ENCODE measurements at regions of chr17 and their contacts with region 1.

Region 1: DNA sequence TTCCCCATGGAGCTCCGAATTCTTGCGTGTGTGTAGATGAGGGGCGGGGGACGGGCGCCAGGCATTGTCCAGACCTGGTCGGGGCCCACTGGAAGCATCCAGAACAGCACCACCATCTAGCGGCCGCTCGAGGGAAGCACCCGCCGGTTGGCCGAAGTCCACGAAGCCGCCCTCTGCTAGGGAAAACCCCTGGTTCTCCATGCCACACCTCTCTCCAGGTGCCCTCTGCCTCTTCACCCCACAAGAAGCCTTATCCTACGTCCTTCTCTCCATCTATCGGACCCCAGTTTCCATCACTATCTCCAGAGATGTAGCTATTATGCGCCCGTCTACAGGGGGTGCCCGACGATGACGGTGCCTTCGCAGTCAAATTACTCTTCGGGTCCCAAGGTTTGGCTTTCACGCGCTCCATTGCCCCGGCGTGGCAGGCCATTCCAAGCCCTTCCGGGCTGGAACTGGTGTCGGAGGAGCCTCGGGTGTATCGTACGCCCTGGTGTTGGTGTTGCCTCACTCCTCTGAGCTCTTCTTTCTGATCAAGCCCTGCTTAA is 617 bp upstream of the SENP3 start:
- DNase-seq: peak; percentile 23
- H3K4me3 ChIP-seq: peak overlapping the region; percentile 84
- CTCF ChIP-seq: peak; percentile 92

Region 2: DNA sequence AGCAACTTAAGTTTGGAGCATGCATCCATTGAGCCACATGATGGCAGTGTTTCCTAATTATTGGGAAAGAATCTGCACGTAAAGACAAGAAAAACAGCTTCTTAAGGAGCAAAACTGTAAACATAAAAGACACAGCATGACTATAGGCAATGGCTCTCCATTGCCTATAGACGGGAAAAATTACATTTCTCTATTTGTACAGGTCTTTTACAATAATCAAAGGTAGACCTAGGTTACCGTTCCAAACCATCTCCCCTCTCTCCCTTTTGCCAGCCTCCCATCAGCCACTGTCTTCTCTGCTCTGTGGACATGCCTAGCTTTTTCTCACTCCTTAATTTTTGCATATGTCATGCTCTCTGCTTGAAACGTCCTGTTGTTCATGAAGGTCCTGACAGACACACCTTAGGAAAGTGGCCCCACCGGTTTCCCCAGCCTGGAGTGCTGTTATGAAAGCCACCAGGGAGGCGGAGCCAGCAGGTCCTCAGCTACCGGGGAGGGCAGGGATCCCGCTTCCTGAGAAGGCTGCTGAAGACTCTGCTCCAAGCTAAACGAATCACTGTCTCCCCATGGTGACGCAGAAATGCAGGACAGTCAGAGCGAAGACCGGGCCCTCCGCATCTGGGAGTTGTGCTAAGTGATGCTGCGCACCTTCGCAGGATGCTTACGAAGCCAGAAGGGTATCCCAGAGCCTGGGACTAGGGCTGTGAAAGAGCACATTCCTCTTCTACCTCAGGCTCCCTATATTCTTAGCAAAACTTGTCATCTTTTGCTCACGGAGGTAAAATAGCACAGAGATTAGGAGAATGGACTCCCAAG is 515.0 kb before region 1 on chr17:
- CTCF ChIA-PET with region 1: interaction called, 15 read pairs
- POLR2A ChIA-PET with region 1: no interaction called
- DNase-seq: peak; percentile 44
- H3K4me3 ChIP-seq: no peak overlapping the region
- CTCF ChIP-seq: peak; percentile 51

Region 3: GRCh38 chr17:7147772-7148171 is 413.3 kb before region 1 on chr17:
- CTCF ChIA-PET with region 1: no interaction called
- POLR2A ChIA-PET with region 1: no interaction called
- DNase-seq: no peak
- H3K4me3 ChIP-seq: no peak overlapping the region
- CTCF ChIP-seq: no peak

Region 4: DNA sequence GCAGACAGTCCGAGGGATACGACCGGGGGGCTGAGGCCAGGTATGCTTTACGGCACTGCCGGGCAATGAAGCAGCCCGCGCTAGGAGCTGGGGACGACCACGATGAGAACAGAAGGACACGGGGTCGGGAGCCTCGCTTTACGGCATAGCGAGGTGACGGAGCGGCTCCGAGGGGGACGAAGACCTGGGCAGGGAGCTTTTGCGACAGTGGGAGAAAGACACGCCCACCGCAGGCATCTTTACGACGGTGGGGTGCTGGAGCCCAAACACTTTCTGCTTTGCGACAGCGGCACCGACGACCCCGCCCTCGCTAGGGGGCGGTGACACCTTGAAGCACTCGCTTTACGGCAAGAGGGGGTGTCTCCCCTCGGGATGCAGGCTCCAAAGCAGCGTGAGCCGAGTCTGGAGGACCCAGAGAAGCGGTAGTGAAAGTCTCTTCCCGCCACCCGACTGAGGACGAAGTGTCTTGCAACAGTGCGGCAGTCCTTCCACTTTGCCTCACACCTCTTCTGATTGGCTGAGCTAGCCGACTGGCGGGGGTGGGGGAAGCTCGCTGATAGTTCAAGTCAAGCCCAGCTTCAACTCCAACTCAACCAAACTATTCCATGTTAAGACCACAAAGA is 231.6 kb before region 1 on chr17:
- CTCF ChIA-PET with region 1: interaction called, 20 read pairs
- POLR2A ChIA-PET with region 1: no interaction called
- DNase-seq: peak; percentile 96
- H3K4me3 ChIP-seq: peak overlapping the region; percentile 96
- CTCF ChIP-seq: no peak

Region 5: GRCh38 chr17:7435221-7435675 is 125.9 kb before region 1 on chr17 and contains the start of gene TMEM102:
- CTCF ChIA-PET with region 1: interaction called, 20 read pairs
- POLR2A ChIA-PET with region 1: no interaction called
- DNase-seq: peak; percentile 40
- H3K4me3 ChIP-seq: peak within 1 kb of the TSS; percentile 56
- CTCF ChIP-seq: no peak

Region 6: GRCh38 chr17:7509937-7510336 is 51.2 kb before region 1 on chr17:
- CTCF ChIA-PET with region 1: interaction called, 140 read pairs
- POLR2A ChIA-PET with region 1: no interaction called
- DNase-seq: no peak
- H3K4me3 ChIP-seq: no peak overlapping the region
- CTCF ChIP-seq: no peak

Region 7: GRCh38 chr17:7538891-7539290 is 22.2 kb before region 1 on chr17:
- CTCF ChIA-PET with region 1: interaction called, 115 read pairs
- POLR2A ChIA-PET with region 1: no interaction called
- DNase-seq: no peak
- H3K4me3 ChIP-seq: no peak overlapping the region
- CTCF ChIP-seq: no peak

Region 8: DNA sequence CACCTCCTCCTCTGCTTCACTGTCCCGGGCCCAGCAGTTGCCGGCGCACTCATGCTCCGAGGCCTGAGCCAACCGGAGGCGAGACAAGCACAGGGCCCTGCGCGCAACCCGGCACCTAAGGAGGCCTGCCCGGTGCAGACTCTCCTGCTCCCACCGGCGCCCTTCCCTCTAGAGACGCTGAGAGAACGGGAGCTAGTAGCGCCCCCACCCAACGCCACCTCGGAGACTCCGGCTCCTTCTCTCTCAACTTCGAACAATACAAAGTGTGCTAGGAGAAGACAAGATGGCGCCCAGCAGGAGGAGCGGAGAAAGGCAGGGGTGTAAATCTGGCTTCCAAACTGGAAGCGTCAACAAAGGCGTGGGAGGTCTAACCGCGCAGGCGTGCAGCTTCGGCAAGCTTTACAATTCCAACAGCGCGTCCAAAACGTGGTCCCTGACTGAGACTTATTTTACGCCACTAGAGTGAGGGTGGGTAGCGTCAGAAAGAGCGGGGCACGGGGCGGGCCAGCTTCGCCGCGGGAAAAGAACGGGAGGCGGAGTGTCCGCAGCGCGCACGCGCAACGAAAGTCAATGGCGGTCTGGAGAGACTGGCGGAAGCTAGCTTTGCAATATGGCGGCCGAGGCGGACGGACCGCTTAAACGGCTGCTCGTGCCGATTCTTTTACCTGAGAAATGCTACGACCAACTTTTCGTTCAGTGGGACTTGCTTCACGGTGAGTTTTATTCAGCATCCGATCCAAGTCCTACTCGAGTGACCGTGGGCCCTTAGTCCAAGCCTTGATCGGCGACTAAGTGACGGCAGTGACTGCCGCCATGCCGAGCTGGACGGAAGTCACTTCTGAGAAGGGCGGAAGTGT is 22.4 kb after region 1 on chr17 and contains the start of gene MPDU1:
- CTCF ChIA-PET with region 1: interaction called, 35 read pairs
- POLR2A ChIA-PET with region 1: interaction called, 4 read pairs
- DNase-seq: peak; percentile 73
- H3K4me3 ChIP-seq: peak within 1 kb of the TSS; percentile 81
- CTCF ChIP-seq: no peak

Measured in AG04449 (cell line).